Activated CD4-positive, alpha-beta T cell treated with anti-CD3 and anti-CD28 coated beads for 36 hours (primary cell): ENCODE measurements at regions of chr9 and their contacts with region 1.

Region 1: GRCh38 chr9:109918339-109919163 is 138.6 kb downstream of the PALM2AKAP2 start:
- DNase-seq: peak; percentile 65
- ATAC-seq: peak; percentile 87
- H3K4me3 Mint-ChIP-seq: peak overlapping the region; percentile 58
- H3K27ac Mint-ChIP-seq: peak overlapping the region; percentile 99
- H3K4me1 Mint-ChIP-seq: peaks cover 34% of the 10 kb centered on the region
- H3K27me3 Mint-ChIP-seq: no peaks in the 10 kb centered on the region

Region 2: GRCh38 chr9:109887079-109887478 is 31.5 kb before region 1 on chr9:
- CTCF ChIA-PET with region 1: interaction called, 3 read pairs
- POLR2A ChIA-PET with region 1: no interaction called
- intact Hi-C with region 1: loop called (anchors 2 kb)
- DNase-seq: no peak
- ATAC-seq: peak; percentile 48
- H3K4me3 Mint-ChIP-seq: no peak overlapping the region
- H3K27ac Mint-ChIP-seq: peak overlapping the region; percentile 88
- H3K4me1 Mint-ChIP-seq: peaks cover 45% of the 10 kb centered on the region
- H3K27me3 Mint-ChIP-seq: no peaks in the 10 kb centered on the region

Region 3: DNA sequence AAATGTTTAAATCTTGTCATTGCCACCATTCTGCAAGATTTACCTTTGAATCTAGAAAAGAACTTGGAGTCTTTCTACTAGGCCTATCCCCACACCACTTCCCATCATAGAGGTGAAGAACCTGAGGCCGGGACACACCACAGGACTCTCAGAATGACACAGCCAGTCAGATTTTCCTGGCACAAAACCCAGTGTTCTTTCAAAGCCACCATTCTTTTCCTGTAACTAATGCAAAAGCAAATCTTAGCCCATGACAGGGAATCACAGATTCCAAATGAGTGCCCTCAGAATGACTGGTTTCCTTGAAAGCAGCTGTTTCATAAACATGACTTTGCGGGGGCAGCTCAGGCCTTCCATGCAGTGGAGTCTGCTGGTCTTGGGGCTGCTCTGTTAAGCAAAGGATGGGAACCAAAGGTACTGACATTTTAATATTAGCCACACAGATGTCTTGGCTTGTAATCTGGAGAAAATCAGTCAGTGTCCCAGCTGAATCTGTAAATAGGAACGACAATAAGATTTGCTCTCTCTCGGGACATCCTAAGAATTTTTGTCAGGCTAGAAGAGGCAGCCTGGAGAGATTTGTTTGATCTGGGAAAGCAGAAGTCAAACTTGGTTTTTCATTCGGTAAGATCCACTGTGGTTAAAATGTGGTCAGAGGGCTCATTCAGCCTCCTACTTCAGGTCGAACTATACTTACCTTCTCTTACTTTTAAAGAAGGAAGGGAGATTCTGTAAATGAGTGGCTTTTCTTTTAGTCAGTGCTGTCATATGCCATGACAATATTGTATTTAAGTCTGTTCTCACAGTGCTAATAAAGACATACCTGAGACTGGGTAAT is 23.4 kb before region 1 on chr9:
- CTCF ChIA-PET with region 1: no interaction called
- POLR2A ChIA-PET with region 1: no interaction called
- intact Hi-C with region 1: loop called in 1 of 2 experiments (anchors 1 kb)
- DNase-seq: peak; percentile 80
- ATAC-seq: peak; percentile 75
- H3K4me3 Mint-ChIP-seq: peak overlapping the region; percentile 36
- H3K27ac Mint-ChIP-seq: peak overlapping the region; percentile 87
- H3K4me1 Mint-ChIP-seq: peaks cover 30% of the 10 kb centered on the region
- H3K27me3 Mint-ChIP-seq: peaks cover 6% of the 10 kb centered on the region

Region 4: DNA sequence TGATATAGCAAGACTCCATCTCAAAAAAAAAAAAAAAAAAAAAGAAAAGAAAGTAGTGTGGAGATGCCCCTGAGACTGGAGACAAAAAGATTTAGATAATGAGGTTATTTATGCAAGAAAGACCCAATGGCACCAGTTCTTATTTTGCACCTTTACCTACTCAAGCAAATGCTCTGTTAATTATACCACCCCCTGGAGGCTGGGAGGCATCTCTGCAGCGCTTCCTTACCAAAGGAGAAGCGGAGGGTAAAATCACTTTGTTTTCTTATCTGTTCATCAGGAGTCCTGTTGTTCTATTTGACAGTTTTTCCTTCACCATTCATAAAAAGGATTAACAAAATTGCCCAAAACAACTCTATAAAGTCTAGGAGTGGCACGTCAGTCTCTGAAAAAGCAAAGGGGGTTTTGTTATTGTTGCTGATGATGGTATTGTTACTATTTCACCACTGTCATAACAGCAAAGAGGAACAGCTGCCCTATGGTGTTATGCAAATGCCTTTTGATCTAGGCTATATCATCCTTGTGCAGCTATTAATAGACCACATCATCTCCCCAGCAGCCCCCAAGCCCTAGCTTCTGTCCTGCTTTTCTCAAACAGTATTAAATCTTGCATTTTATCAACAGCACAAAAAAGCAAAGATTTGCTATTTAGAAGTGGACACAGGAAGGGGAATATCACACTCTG is 35.4 kb after region 1 on chr9:
- CTCF ChIA-PET with region 1: interaction called, 3 read pairs
- POLR2A ChIA-PET with region 1: interaction called, 3 read pairs
- intact Hi-C with region 1: loop called (anchors 1 to 2 kb)
- DNase-seq: no peak
- ATAC-seq: no peak
- H3K4me3 Mint-ChIP-seq: no peak overlapping the region
- H3K27ac Mint-ChIP-seq: no peak overlapping the region
- H3K4me1 Mint-ChIP-seq: peaks cover 44% of the 10 kb centered on the region
- H3K27me3 Mint-ChIP-seq: peaks cover 5% of the 10 kb centered on the region

Region 5: GRCh38 chr9:110048403-110048975 is 129.9 kb after region 1 on chr9:
- CTCF ChIA-PET with region 1: interaction called, 3 read pairs
- POLR2A ChIA-PET with region 1: no interaction called
- intact Hi-C with region 1: loop called in 1 of 2 experiments (anchors 2 kb)
- DNase-seq: peak; percentile 93
- ATAC-seq: peak; percentile 89
- H3K4me3 Mint-ChIP-seq: peak overlapping the region; percentile 87
- H3K27ac Mint-ChIP-seq: peak overlapping the region; percentile 75
- H3K4me1 Mint-ChIP-seq: peaks cover 36% of the 10 kb centered on the region
- H3K27me3 Mint-ChIP-seq: peaks cover 10% of the 10 kb centered on the region

Region 6: GRCh38 chr9:110241260-110241857 is 322.8 kb after region 1 on chr9:
- CTCF ChIA-PET with region 1: no interaction called
- POLR2A ChIA-PET with region 1: no interaction called
- intact Hi-C with region 1: no loop called
- DNase-seq: no peak
- ATAC-seq: no peak
- H3K4me3 Mint-ChIP-seq: no peak overlapping the region
- H3K27ac Mint-ChIP-seq: no peak overlapping the region
- H3K4me1 Mint-ChIP-seq: no peaks in the 10 kb centered on the region
- H3K27me3 Mint-ChIP-seq: no peaks in the 10 kb centered on the region